ENCODE measurements at regions of chr11 and their contacts with region 1.

Region 1: GRCh38 chr11:70226782-70227369 is 23.8 kb downstream of the FADD start:
- DNase-seq: no peak
- ATAC-seq: no peak
- H3K4me3 ChIP-seq: no peak overlapping the region
- H3K27ac ChIP-seq: no peak overlapping the region
- H3K4me1 ChIP-seq: no peaks in the 10 kb centered on the region; the same call in 1 of the 2 replicates
- H3K27me3 ChIP-seq: no peaks in the 10 kb centered on the region
- CTCF ChIP-seq: no peak

Region 2: GRCh38 chr11:69918938-69919650 is 307.8 kb before region 1 on chr11:
- CTCF ChIA-PET with region 1: interaction called, 11 read pairs
- POLR2A ChIA-PET with region 1: no interaction called
- in situ Hi-C with region 1: no loop called
- intact Hi-C with region 1: no loop called
- DNase-seq: no peak
- ATAC-seq: peak; percentile 83
- H3K4me3 ChIP-seq: peak overlapping the region in 1 of 2 experiments; percentile 16; a peak in 1 of 4 replicates
- H3K27ac ChIP-seq: no peak overlapping the region
- H3K4me1 ChIP-seq: peaks cover 24% of the 10 kb centered on the region
- H3K27me3 ChIP-seq: peaks cover 4% of the 10 kb centered on the region; the same call in 1 of the 2 replicates
- CTCF ChIP-seq: peak; percentile 99

Region 3: DNA sequence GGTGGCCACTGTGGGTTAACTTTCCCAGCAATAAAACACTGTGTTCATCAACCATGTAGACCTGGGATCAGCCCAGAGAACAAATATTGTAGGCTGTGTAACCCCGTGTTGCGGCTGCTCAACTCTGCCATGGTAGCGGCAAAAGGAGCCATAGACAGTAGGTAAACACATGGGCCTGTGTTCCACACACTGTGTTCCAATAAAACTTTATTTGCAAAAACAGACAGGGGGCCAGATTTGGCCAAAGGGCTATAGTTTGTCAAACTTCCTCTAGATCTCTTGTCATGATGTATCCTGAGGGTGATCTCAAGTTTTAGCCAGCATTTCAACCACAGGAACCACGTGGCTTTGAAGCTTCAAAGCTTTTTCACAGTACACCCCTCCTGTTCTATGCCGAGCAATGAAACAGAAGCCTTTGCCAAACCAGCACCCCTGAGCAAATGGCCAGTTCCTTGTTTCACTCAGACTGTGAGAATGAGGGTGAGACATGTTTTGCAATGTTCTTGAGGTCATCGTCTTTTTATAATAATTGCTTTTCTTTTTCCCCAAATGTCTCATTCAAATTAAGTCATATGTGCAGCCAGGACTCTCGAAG is 73.6 kb before region 1 on chr11:
- CTCF ChIA-PET with region 1: no interaction called
- POLR2A ChIA-PET with region 1: no interaction called
- in situ Hi-C with region 1: no loop called
- intact Hi-C with region 1: no loop called
- DNase-seq: no peak
- ATAC-seq: no peak
- H3K4me3 ChIP-seq: no peak overlapping the region
- H3K27ac ChIP-seq: no peak overlapping the region
- H3K4me1 ChIP-seq: no peaks in the 10 kb centered on the region
- H3K27me3 ChIP-seq: no peaks in the 10 kb centered on the region
- CTCF ChIP-seq: no peak

Region 4: DNA sequence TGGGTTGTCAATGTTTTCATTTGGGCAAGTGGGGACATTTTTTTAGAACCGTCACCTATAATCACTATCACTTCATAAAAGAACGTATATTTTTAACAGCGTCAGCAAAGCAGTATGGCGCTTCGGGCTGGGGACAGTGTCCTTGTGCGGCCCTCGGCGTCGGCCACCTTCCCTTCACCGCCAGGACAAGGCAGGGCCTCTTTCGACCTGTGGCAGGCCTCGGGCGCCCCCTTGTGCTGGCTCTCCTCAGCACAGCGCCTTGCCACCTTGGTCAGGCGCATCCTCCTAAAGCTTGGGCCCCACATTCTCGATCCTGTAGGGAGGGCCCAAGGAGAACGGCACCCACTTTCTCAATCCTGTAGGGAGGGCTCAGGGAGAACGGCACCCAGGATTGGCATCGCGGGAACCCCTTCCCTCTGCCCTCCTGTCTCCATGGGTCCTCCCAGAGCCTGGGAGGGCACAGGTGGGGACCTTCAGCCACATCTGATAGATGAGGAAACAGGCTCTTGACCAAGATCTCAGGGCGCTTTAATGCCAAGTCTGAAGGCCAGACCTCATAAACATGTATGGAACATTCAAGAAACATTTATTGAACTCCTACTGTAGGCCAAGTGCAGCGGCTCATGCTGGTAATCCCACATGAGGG is 35.3 kb before region 1 on chr11:
- CTCF ChIA-PET with region 1: no interaction called
- POLR2A ChIA-PET with region 1: no interaction called
- in situ Hi-C with region 1: no loop called
- intact Hi-C with region 1: no loop called
- DNase-seq: no peak
- ATAC-seq: peak; percentile 96
- H3K4me3 ChIP-seq: no peak overlapping the region
- H3K27ac ChIP-seq: no peak overlapping the region
- H3K4me1 ChIP-seq: no peaks in the 10 kb centered on the region
- H3K27me3 ChIP-seq: no peaks in the 10 kb centered on the region
- CTCF ChIP-seq: peak; percentile 98

Region 5: DNA sequence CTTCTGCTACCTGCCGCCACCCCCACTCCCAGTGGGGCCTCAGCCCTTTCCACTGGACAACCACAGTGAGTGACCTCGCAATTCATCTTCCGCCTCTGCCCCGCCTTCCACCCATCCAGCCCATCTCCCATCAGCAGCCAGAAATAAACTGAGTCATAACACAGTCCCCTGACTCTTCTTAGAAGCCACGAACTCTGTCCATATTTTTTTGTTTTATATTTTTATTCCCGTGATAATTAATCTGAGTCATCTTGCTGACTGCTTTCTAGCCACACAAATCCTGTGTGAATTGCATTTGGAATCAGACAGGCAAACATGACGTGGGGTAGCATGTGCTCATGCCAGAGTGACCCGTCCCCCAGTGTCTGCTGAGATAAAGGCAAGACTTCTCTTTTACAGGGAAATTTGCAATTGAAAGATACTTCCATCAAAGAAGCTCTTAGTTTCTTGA is 16.8 kb before region 1 on chr11:
- CTCF ChIA-PET with region 1: no interaction called
- POLR2A ChIA-PET with region 1: no interaction called
- in situ Hi-C with region 1: no loop called
- intact Hi-C with region 1: no loop called
- DNase-seq: no peak
- ATAC-seq: no peak
- H3K4me3 ChIP-seq: no peak overlapping the region
- H3K27ac ChIP-seq: no peak overlapping the region
- H3K4me1 ChIP-seq: peaks cover 13% of the 10 kb centered on the region
- H3K27me3 ChIP-seq: no peaks in the 10 kb centered on the region
- CTCF ChIP-seq: no peak